Endothelial cell of umbilical vein (primary cell): ENCODE measurements at regions of chr14 and their contacts with region 1.

Region 1: DNA sequence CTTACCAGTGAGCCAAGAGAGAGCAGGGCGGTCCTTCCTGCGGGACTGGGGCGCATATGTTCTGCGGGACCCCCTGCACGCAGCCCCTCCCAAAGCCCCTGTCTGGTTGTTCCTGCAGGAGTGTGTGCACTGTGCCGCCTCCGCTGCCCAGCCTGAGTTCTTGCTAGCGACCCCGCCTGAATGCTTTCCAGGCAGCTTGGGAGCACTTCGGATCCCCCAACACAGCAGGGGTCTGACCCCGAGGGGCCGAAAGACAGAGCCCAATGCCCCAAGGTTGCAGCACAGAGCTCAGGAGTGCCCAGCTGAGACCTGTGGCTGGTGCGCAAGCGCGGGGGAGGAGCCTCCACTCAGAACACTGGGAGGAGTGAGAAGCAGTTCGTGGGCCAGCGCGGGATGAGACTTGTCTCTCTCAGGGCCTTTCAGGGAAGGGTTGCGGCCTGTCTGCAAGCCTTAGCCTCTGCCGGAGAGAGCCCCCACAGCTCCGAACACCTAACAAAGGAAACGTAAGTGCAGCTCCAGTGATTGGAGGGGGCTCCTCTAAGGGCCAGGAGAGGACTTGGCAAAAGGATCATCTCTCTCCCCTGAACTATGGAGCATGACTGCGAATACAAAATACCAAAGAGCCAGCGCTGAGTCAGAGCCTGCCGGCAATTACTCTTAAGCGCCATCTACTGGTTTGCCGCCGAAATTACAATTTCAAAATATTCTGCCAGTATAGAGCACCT is 50.5 kb downstream of the GTF2A1 start:
- DNase-seq: peak; percentile 92
- H3K4me3 ChIP-seq: peak overlapping the region; percentile 33 to 72 (median 50)
- H3K27ac ChIP-seq: peak overlapping the region; percentile 77
- H3K4me1 ChIP-seq: peaks cover 12% of the 10 kb centered on the region
- H3K27me3 ChIP-seq: no peaks in the 10 kb centered on the region
- CTCF ChIP-seq: peak; percentile 76 to 88
- POLR2A ChIP-seq: peak; percentile 87

Region 2: DNA sequence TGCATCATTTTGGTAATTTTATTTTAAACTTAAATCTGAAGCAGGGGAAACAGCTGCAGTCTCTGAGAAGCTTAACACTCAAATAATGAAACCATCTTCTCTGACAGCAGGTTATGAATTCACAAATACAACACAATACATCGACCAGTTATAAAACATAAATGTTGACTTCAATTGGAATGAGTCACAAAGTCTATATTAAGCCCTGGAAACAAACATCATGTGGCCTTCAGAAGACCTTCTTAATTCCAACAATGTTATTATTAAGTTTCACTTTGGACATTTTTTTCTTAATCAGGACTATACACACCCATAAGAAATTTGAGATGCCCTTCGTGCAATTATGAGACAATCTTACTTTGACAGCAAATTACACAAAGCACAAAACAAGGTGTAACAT is 297.6 kb before region 1 on chr14:
- CTCF ChIA-PET with region 1: no interaction called
- POLR2A ChIA-PET with region 1: no interaction called
- dilution Hi-C with region 1: no loop called
- intact Hi-C with region 1: loop called (anchors 5 kb)
- DNase-seq: peak; percentile 48
- H3K4me3 ChIP-seq: no peak overlapping the region
- H3K27ac ChIP-seq: no peak overlapping the region
- H3K4me1 ChIP-seq: no peaks in the 10 kb centered on the region
- H3K27me3 ChIP-seq: no peaks in the 10 kb centered on the region
- CTCF ChIP-seq: no peak
- POLR2A ChIP-seq: no peak

Region 3: GRCh38 chr14:80954687-80955299 is 215.5 kb before region 1 on chr14:
- CTCF ChIA-PET with region 1: interaction called, 8 read pairs
- POLR2A ChIA-PET with region 1: no interaction called
- dilution Hi-C with region 1: no loop called
- intact Hi-C with region 1: loop called (anchors 1 kb)
- DNase-seq: peak; percentile 80
- H3K4me3 ChIP-seq: peak overlapping the region; percentile 5 to 51 (median 14)
- H3K27ac ChIP-seq: no peak overlapping the region
- H3K4me1 ChIP-seq: peaks cover 4% of the 10 kb centered on the region
- H3K27me3 ChIP-seq: peaks cover 25 to 58% of the 10 kb centered on the region in 2 experiments
- CTCF ChIP-seq: peak; percentile 70
- POLR2A ChIP-seq: no peak

Region 4: DNA sequence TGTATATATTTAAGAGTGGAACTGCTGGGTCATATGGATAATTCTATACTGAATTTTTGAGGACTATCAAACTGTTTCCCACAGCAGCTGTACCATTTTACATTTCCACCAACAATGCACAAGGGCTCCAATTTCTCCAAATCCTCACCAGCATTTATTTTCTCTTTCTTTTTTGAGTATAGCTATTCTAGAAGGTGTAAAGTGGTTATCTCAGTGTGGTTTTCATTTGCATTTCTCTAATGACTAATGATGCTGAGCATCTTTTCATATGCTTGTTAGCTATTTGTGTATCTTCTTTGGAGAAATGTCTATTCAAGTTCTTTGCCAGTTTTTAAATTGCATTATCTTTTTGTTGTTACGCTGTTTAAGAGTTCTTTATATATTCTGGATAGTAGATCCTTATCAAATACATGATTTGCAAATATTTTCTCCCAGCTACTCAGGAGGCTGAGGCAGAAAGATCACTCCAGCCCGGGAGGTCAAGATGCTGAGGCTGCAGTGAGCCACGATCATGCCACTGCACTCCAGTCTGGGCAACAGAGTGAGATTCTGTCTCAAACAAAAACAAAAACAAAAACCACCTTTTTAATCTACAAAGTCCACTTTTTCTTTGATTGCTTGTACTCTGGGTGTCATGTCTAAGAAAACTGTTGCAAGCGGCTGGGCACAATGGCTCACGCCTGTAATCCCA is 17.7 kb after region 1 on chr14:
- CTCF ChIA-PET with region 1: interaction called, 11 read pairs
- POLR2A ChIA-PET with region 1: no interaction called
- dilution Hi-C with region 1: no loop called
- intact Hi-C with region 1: no loop called
- DNase-seq: no peak
- H3K4me3 ChIP-seq: no peak overlapping the region
- H3K27ac ChIP-seq: no peak overlapping the region
- H3K4me1 ChIP-seq: no peaks in the 10 kb centered on the region
- H3K27me3 ChIP-seq: no peaks in the 10 kb centered on the region
- CTCF ChIP-seq: no peak
- POLR2A ChIP-seq: no peak

Region 5: DNA sequence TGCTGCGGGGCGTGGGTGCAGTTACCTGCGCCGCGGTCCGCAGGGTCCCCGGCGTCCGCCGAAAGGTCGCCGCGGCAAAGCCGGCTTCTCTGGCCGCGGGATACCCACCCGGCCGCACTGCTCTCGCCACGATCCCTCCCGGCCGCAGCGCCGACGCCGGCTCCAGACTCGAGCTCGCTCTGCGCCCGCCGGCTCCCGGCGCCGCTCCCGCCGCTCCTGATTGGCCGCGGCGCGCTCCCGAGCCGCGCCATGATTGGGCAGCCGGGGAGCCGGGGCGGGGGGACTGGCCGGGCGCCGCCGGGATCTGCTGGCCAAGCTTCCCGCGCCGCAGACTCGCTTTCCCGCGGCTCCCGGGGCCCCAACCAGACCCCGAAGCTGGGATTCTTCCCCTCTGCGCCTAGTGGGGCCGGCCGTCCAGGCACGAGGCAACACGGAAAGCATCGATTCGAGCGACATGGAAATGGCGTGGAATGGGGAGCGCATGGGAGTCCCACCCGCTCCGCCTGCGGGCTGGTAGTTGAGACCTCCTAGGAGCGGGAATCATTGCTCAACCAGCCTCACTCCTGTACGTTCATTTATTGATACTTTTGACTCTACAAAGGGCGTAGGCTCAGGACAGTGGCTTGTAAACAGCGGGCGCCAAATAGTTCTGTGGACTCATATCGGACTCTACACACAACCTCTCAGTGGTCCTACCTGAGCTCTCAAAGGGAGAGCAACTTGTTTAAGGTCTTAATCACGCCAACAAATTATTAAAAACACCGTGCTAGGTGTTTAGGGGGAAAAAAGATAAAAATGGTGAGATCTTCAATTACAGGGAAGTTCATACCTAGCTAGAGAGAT is 266.3 kb after region 1 on chr14:
- CTCF ChIA-PET with region 1: no interaction called
- POLR2A ChIA-PET with region 1: no interaction called
- dilution Hi-C with region 1: no loop called
- intact Hi-C with region 1: no loop called
- DNase-seq: peak; percentile 56
- H3K4me3 ChIP-seq: peak overlapping the region in 2 of 3 experiments; percentile 23 to 28
- H3K27ac ChIP-seq: no peak overlapping the region
- H3K4me1 ChIP-seq: peaks cover 5% of the 10 kb centered on the region
- H3K27me3 ChIP-seq: peaks cover 34 to 36% of the 10 kb centered on the region in 2 experiments
- CTCF ChIP-seq: no peak
- POLR2A ChIP-seq: no peak